Activated T-helper 2 cell treated with anti-CD3 and anti-CD28 coated beads, Interferon-gamma antibody, Interleukin-2, Interleukin-4, amounts not matched to agents 10 μg/mL and 5 μg/mL and 100 μg/mL, durations not matched to agents 14 hours and 24 hours and 36 hours (primary cell): ENCODE measurements at regions of chr9 and their contacts with region 1.

Region 1: GRCh38 chr9:70413798-70414775 is at the start of gene KLF9:
- DNase-seq: peak; percentile 92
- H3K4me3 Mint-ChIP-seq: peak within 1 kb of the TSS; percentile 95
- H3K27ac Mint-ChIP-seq: peak within 1 kb of the TSS; percentile 100
- H3K4me1 Mint-ChIP-seq: peaks cover 41% of the 10 kb centered on the region
- H3K27me3 Mint-ChIP-seq: no peaks in the 10 kb centered on the region
- total RNA-seq, gene KLF9: 13.5 and 13.7 TPM in 2 replicates

Region 2: GRCh38 chr9:70258692-70259511 is 155.2 kb before region 1 on chr9 and contains the start of gene SMC5:
- intact Hi-C with region 1: loop called (anchors 2 kb)
- DNase-seq: peak; percentile 89
- H3K4me3 Mint-ChIP-seq: peak within 1 kb of the TSS; percentile 87
- H3K27ac Mint-ChIP-seq: peak within 1 kb of the TSS; percentile 96
- H3K4me1 Mint-ChIP-seq: peaks cover 47% of the 10 kb centered on the region
- H3K27me3 Mint-ChIP-seq: peaks cover 7% of the 10 kb centered on the region
- total RNA-seq, gene SMC5: 45.3 and 51.0 TPM in 2 replicates

Region 3: GRCh38 chr9:70398145-70398556 is 15.9 kb before region 1 on chr9:
- intact Hi-C with region 1: loop called (anchors 1 kb)
- DNase-seq: no peak
- H3K4me3 Mint-ChIP-seq: peak overlapping the region; percentile 31
- H3K27ac Mint-ChIP-seq: peak overlapping the region; percentile 66
- H3K4me1 Mint-ChIP-seq: peaks cover 30% of the 10 kb centered on the region
- H3K27me3 Mint-ChIP-seq: no peaks in the 10 kb centered on the region

Region 4: GRCh38 chr9:70563431-70564204 is 149.5 kb after region 1 on chr9:
- intact Hi-C with region 1: loop called (anchors 1 kb)
- DNase-seq: peak; percentile 67
- H3K4me3 Mint-ChIP-seq: peak overlapping the region; percentile 45
- H3K27ac Mint-ChIP-seq: peak overlapping the region; percentile 93
- H3K4me1 Mint-ChIP-seq: peaks cover 52% of the 10 kb centered on the region
- H3K27me3 Mint-ChIP-seq: no peaks in the 10 kb centered on the region

Region 5: GRCh38 chr9:70761139-70761670 is 347.1 kb after region 1 on chr9:
- intact Hi-C with region 1: no loop called
- DNase-seq: no peak
- H3K4me3 Mint-ChIP-seq: no peak overlapping the region
- H3K27ac Mint-ChIP-seq: no peak overlapping the region
- H3K4me1 Mint-ChIP-seq: no peaks in the 10 kb centered on the region
- H3K27me3 Mint-ChIP-seq: no peaks in the 10 kb centered on the region

Region 6: DNA sequence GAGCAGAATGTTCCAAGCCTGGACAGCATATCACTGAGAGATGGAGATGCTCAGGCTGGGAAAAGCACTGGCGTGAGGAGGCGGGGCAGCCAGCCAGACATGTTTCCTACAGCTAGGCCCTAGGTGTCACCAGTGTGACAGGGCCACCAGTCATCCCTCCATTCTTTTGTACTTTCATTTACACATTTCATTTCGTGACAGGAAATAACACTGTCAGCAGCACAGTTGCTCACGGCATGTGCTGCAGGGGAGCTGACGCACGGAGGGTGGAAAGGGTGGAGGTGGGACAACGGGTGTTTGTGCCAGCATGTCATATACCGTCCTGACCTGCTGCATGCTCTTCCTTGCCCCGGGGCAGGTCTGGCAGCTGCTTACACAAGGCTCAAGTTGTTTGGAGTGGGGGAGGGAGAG is 1369.0 kb after region 1 on chr9:
- intact Hi-C with region 1: loop called (anchors 2 kb)
- DNase-seq: peak; percentile 81
- H3K4me3 Mint-ChIP-seq: peak overlapping the region; percentile 70
- H3K27ac Mint-ChIP-seq: peak overlapping the region; percentile 99
- H3K4me1 Mint-ChIP-seq: peaks cover 48% of the 10 kb centered on the region
- H3K27me3 Mint-ChIP-seq: no peaks in the 10 kb centered on the region